ENCODE measurements at regions of chr11 and their contacts with region 1.

Region 1: GRCh38 chr11:65859200-65859811 is 927 bp upstream of the MUS81 start:
- DNase-seq: peak; percentile 95
- ATAC-seq: peak; percentile 66
- H3K4me3 ChIP-seq: peak overlapping the region; percentile 85 to 100
- H3K27ac ChIP-seq: peak overlapping the region; percentile 97
- H3K4me1 ChIP-seq: peaks cover 23 to 44% of the 10 kb centered on the region in 2 experiments
- H3K27me3 ChIP-seq: no peaks in the 10 kb centered on the region
- CTCF ChIP-seq: no peak
- POLR2A ChIP-seq: peak; percentile 78
- RAD21 ChIP-seq: no peak

Region 2: DNA sequence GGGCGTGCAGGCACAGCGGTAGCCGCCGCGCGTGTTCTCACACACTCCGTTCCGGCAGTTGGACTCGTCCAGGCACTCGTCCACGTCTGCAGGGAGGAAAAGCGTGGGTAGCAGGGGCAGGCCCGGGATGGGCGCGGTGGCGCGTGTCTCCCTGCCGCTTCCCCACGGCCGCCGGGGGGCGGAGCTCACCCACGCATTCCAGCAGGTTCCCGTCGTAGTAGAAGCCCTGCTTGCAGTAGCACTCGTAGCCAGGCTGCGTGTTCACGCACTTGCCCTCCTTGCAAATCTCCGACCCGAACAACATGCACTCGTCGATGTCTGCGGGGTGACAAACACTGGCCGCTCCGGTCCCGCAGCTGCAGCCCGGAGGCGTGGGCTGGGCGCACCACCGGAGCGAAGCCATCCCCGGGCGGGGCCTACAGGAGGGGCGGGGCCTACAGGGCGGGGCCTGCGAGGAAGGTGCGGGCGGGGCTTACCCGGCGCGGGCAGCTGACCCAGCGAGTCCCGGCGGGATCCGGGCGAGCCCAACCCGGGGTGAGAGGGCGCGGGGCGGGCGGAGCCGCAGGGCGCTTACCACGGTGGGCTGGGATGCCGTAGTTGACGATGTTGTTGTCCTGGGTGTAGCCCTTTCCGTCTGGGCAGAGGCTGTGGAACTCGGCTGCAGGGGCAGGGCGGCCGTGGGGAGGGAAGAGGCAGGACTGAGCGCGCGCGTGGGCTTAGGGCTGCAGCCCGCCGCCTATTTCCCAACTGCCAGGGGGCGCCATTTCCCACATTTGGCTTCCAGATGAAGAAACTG is 318.8 kb before region 1 on chr11:
- CTCF ChIA-PET with region 1: no interaction called
- POLR2A ChIA-PET with region 1: no interaction called
- RAD21 ChIA-PET with region 1: no interaction called
- intact Hi-C with region 1: no loop called
- DNase-seq: peak; percentile 64
- ATAC-seq: peak; percentile 73
- H3K4me3 ChIP-seq: peak overlapping the region; percentile 68 to 85
- H3K27ac ChIP-seq: peak overlapping the region; percentile 100
- H3K4me1 ChIP-seq: peaks cover 13 to 39% of the 10 kb centered on the region in 2 experiments; a peak in 3 of 4 replicates
- H3K27me3 ChIP-seq: no peaks in the 10 kb centered on the region
- CTCF ChIP-seq: peak in 2 of 3 experiments; percentile 82 to 85; a peak in 4 of 6 replicates
- POLR2A ChIP-seq: no peak
- RAD21 ChIP-seq: no peak

Region 3: GRCh38 chr11:65873318-65874156 is 14.2 kb after region 1 on chr11:
- CTCF ChIA-PET with region 1: interaction called, 15 read pairs
- POLR2A ChIA-PET with region 1: interaction called, 36 read pairs
- RAD21 ChIA-PET with region 1: no interaction called
- intact Hi-C with region 1: no loop called
- DNase-seq: peak; percentile 83
- ATAC-seq: peak; percentile 90
- H3K4me3 ChIP-seq: peak overlapping the region; percentile 52 to 55
- H3K27ac ChIP-seq: peak overlapping the region; percentile 55
- H3K4me1 ChIP-seq: peaks cover 10 to 13% of the 10 kb centered on the region in 2 experiments; a peak in 3 of 4 replicates
- H3K27me3 ChIP-seq: no peaks in the 10 kb centered on the region
- CTCF ChIP-seq: no peak
- POLR2A ChIP-seq: no peak
- RAD21 ChIP-seq: no peak

Region 4: DNA sequence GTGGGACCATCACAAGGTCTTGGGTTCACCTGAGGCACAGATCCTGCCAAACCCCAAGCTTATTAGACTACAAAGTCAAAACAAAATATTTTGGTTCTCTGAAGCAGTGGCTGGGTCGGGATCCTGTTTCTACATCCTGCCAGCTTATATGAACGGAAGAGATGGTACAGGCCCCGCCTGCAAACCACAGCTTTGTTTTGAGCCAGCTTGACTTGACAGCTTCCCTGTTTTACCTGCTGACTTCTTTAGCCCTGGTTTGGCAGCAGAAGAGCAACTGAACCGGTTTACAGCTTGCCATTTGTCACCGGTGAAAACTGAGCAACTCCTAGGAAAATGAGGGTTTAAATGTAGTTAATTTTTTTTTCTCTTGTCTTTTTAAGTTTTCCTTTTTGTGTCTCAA is 222.2 kb after region 1 on chr11:
- CTCF ChIA-PET with region 1: no interaction called
- POLR2A ChIA-PET with region 1: no interaction called
- RAD21 ChIA-PET with region 1: no interaction called
- intact Hi-C with region 1: no loop called
- DNase-seq: no peak
- ATAC-seq: peak; percentile 33; the same call in 1 of the 2 replicates
- H3K4me3 ChIP-seq: no peak overlapping the region
- H3K27ac ChIP-seq: no peak overlapping the region
- H3K4me1 ChIP-seq: peaks cover 46 to 62% of the 10 kb centered on the region in 2 experiments
- H3K27me3 ChIP-seq: no peaks in the 10 kb centered on the region
- CTCF ChIP-seq: no peak
- POLR2A ChIP-seq: no peak
- RAD21 ChIP-seq: no peak

Measured in HCT116 (cell line).